Endothelial cell of umbilical vein (primary cell): ENCODE measurements at regions of chr12 and their contacts with region 1.

Region 1: GRCh38 chr12:57452937-57453509 is 2.1 kb upstream of the INHBE start:
- DNase-seq: peak; percentile 75
- H3K4me3 ChIP-seq: no peak overlapping the region
- H3K27ac ChIP-seq: no peak overlapping the region
- H3K4me1 ChIP-seq: peaks cover 3% of the 10 kb centered on the region
- H3K27me3 ChIP-seq: no peaks in the 10 kb centered on the region
- CTCF ChIP-seq: peak; percentile 85 to 93
- POLR2A ChIP-seq: no peak

Region 2: DNA sequence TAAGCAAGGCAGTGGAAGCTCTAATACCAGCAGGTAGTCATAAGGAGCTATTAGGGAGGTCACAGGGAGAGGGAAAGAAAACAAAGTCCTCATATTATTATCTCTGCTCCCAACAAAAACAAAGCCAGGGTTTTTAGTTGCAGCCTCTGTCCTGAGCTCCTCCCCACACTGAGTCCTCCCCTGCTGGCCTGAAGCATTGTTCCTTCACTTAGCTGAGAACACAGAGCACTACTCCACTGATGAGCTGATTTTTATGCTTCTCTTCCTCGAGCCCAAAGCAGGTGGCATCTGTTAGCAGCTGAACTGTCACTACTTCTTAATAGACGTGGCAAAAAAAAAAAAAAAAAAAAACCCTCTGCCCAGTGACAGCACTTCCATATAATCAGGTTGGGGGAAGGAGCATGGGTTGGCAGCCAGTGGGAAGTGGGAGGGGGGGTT is 191.6 kb before region 1 on chr12:
- CTCF ChIA-PET with region 1: interaction called, 82 read pairs
- POLR2A ChIA-PET with region 1: no interaction called
- dilution Hi-C with region 1: no loop called
- intact Hi-C with region 1: loop called (anchors 1 kb)
- DNase-seq: no peak
- H3K4me3 ChIP-seq: no peak overlapping the region
- H3K27ac ChIP-seq: no peak overlapping the region
- H3K4me1 ChIP-seq: no peaks in the 10 kb centered on the region
- H3K27me3 ChIP-seq: no peaks in the 10 kb centered on the region
- CTCF ChIP-seq: no peak
- POLR2A ChIP-seq: no peak

Region 3: DNA sequence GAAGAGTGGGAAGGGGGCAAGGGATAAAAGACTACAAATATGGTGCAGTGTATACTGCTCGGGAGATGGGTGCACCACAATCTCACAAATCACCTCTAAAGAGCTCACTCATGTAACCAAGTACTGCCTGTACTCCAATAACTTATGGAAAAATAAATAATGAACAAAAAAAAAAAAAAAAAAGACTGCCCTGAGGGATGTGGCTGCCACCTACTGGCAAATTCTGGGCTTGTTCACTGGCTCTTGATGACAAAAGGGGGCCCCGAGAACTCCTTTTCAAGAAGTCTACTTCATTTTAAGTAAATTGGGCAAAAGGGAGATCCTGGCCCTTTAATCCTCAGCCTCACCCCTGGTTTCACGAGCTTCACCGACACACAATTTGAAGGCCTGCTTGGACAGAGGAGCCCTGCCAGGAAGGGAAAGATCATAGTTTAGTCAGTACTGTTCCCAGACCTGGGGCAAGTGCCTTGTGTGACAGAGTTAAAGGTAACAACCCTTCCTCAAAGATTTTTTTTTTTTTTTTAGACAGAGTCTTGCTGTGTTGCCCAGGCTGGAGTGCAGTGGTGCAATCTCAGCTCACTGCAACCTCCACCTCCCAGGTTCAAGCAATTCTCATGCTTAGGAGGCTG is 176.0 kb before region 1 on chr12:
- CTCF ChIA-PET with region 1: interaction called, 20 read pairs
- POLR2A ChIA-PET with region 1: no interaction called
- dilution Hi-C with region 1: no loop called
- intact Hi-C with region 1: no loop called
- DNase-seq: peak; percentile 49
- H3K4me3 ChIP-seq: no peak overlapping the region
- H3K27ac ChIP-seq: no peak overlapping the region
- H3K4me1 ChIP-seq: peaks cover 18% of the 10 kb centered on the region
- H3K27me3 ChIP-seq: no peaks in the 10 kb centered on the region
- CTCF ChIP-seq: peak; percentile 41 to 48
- POLR2A ChIP-seq: no peak

Region 4: GRCh38 chr12:57309420-57309819 is 143.6 kb before region 1 on chr12:
- CTCF ChIA-PET with region 1: interaction called, 394 read pairs
- POLR2A ChIA-PET with region 1: interaction called, 6 read pairs
- dilution Hi-C with region 1: no loop called
- intact Hi-C with region 1: loop called (anchors 1 kb)
- DNase-seq: peak; percentile 48
- H3K4me3 ChIP-seq: no peak overlapping the region
- H3K27ac ChIP-seq: peak overlapping the region; percentile 28
- H3K4me1 ChIP-seq: peaks cover 14% of the 10 kb centered on the region
- H3K27me3 ChIP-seq: no peaks in the 10 kb centered on the region
- CTCF ChIP-seq: no peak
- POLR2A ChIP-seq: no peak

Region 5: DNA sequence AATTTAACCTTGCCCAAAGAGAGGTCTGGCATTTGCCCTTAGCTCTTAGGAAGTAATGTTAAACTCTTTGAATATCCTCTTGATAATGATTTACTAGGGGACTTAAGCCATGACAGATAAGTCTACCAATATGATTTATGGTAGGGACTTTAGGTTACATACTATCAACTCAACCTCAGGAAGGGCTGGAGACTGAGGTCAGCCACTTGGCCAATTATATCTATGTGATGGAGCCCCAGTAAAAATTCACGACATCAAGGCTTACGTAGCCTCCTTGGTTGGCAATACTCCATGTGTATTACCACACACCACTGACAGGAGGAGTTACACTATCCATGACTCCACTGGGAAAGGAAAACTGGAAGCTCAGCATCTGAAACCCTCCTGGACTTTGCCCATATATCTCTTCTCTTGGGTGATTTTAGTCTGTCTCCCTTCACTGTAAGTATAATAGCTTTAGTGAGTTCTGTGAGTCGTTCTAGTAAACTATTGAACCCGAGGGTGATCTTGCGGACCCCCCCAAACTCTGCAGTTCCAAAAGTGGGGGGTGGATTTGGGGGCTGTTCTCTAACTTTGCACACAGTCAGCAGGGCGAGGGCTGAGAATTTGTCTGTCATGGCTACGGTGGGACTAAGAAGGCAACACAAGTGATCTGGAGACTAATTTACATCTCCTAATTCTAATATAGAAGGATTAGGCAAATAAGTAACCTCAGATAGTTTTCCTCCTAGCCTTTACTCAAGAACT is 84.5 kb before region 1 on chr12:
- CTCF ChIA-PET with region 1: interaction called, 14 read pairs
- POLR2A ChIA-PET with region 1: no interaction called
- dilution Hi-C with region 1: no loop called
- intact Hi-C with region 1: no loop called
- DNase-seq: no peak
- H3K4me3 ChIP-seq: no peak overlapping the region
- H3K27ac ChIP-seq: no peak overlapping the region
- H3K4me1 ChIP-seq: no peaks in the 10 kb centered on the region
- H3K27me3 ChIP-seq: no peaks in the 10 kb centered on the region
- CTCF ChIP-seq: no peak
- POLR2A ChIP-seq: no peak

Region 6: GRCh38 chr12:57438400-57438799 is 14.6 kb before region 1 on chr12:
- CTCF ChIA-PET with region 1: interaction called, 10 read pairs
- POLR2A ChIA-PET with region 1: no interaction called
- dilution Hi-C with region 1: no loop called
- intact Hi-C with region 1: no loop called
- DNase-seq: no peak
- H3K4me3 ChIP-seq: no peak overlapping the region
- H3K27ac ChIP-seq: no peak overlapping the region
- H3K4me1 ChIP-seq: no peaks in the 10 kb centered on the region
- H3K27me3 ChIP-seq: peaks cover 0 to 2% of the 10 kb centered on the region in 2 experiments
- CTCF ChIP-seq: no peak
- POLR2A ChIP-seq: no peak

Region 7: DNA sequence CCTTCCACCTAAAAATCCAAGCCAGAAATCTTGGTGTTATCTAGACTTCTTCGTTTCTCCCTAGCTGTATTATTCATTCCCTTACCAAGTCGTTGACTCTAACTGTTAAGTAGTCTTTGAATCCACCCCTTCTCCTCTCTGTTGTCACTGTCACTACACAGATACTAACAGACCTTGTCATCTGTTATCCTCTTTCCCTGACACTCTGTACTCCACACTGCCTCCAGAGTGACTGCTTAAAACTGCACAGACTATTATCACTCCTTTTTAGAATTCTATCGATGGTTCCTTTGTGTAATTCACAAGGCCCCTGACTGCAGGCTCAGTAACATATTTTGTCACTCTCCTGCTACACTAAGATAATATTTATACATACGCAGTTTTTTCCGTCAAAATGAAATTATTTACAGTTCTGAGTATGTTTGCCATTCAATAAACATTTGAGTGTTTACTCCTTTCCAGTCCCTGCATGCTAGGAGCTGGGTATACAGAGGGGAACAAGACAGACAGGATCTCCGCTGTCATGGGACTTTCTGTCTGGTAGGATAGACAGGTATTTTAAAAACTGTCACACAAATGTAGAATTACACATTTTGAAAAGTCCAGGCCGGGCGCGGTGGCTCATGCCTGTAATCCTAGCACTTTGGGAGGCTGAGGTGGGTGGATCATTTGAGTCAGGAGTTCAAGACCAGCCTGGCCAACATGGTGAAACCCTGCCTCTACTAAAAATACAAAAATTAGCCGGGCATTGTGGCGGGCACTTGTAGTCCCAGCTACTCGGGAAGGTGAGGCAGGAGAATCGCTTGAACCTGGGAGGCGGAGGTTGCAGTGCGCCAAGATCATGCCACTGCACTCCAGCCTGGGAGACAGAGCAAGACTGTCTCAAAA is 38.6 kb after region 1 on chr12:
- CTCF ChIA-PET with region 1: no interaction called
- POLR2A ChIA-PET with region 1: no interaction called
- dilution Hi-C with region 1: no loop called
- intact Hi-C with region 1: no loop called
- DNase-seq: no peak
- H3K4me3 ChIP-seq: no peak overlapping the region
- H3K27ac ChIP-seq: no peak overlapping the region
- H3K4me1 ChIP-seq: peaks cover 9% of the 10 kb centered on the region
- H3K27me3 ChIP-seq: no peaks in the 10 kb centered on the region
- CTCF ChIP-seq: no peak
- POLR2A ChIP-seq: no peak